ENCODE measurements at regions of chr1 and their contacts with region 1.

Region 1: DNA sequence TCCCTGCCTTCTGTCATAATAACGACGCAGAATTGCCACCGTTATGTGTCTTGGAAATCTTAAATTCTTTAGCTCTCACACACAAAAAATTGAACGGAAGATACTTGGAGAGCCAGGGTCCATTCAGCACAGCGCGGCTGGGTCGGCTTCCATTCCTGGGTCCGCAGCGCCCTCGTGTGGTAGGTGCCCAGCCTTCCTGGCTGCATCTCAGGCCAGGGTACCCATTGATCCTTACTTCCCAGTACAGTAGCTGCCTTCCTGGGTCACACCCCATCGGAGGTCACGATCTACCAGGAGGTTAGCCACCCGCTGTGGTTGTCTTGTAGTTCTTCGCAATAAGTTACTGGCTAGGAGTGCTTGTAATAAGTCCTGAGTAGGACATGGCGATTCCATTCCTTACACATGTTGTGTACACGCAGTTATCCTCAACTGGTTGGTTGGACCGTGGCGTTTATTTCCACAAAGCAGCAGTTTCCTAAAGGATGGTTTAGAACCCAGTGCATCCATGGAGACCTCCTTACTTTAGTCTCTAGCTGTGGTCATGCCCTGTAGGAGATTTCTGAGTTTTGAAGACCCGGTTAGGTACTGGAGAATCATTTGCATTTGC is 9.9 kb upstream of the MTARC1 start:
- DNase-seq: peak; percentile 87
- ATAC-seq: peak; percentile 87
- H3K4me3 Mint-ChIP-seq: no peak overlapping the region
- H3K27ac Mint-ChIP-seq: no peak overlapping the region
- H3K4me1 Mint-ChIP-seq: no peaks in the 10 kb centered on the region
- H3K27me3 Mint-ChIP-seq: peaks cover 11% of the 10 kb centered on the region

Region 2: GRCh38 chr1:219837274-219837993 is 939.4 kb before region 1 on chr1:
- CTCF ChIA-PET with region 1: no interaction called
- POLR2A ChIA-PET with region 1: no interaction called
- intact Hi-C with region 1: loop called in 1 of 2 experiments (anchors 5 kb)
- DNase-seq: no peak
- ATAC-seq: no peak
- H3K4me3 Mint-ChIP-seq: no peak overlapping the region
- H3K27ac Mint-ChIP-seq: no peak overlapping the region
- H3K4me1 Mint-ChIP-seq: no peaks in the 10 kb centered on the region
- H3K27me3 Mint-ChIP-seq: peaks cover 16% of the 10 kb centered on the region

Region 3: GRCh38 chr1:220189750-220190347 is 587.0 kb before region 1 on chr1:
- CTCF ChIA-PET with region 1: interaction called, 5 read pairs
- POLR2A ChIA-PET with region 1: no interaction called
- intact Hi-C with region 1: loop called in 1 of 2 experiments (anchors 1 kb)
- DNase-seq: no peak
- ATAC-seq: no peak
- H3K4me3 Mint-ChIP-seq: no peak overlapping the region
- H3K27ac Mint-ChIP-seq: no peak overlapping the region
- H3K4me1 Mint-ChIP-seq: no peaks in the 10 kb centered on the region
- H3K27me3 Mint-ChIP-seq: no peaks in the 10 kb centered on the region

Region 4: GRCh38 chr1:220281159-220281574 is 495.7 kb before region 1 on chr1:
- CTCF ChIA-PET with region 1: no interaction called
- POLR2A ChIA-PET with region 1: no interaction called
- intact Hi-C with region 1: loop called in 1 of 2 experiments (anchors 5 kb)
- DNase-seq: no peak
- ATAC-seq: no peak
- H3K4me3 Mint-ChIP-seq: no peak overlapping the region
- H3K27ac Mint-ChIP-seq: no peak overlapping the region
- H3K4me1 Mint-ChIP-seq: no peaks in the 10 kb centered on the region
- H3K27me3 Mint-ChIP-seq: peaks cover 7% of the 10 kb centered on the region

Region 5: GRCh38 chr1:220521778-220522177 is 255.0 kb before region 1 on chr1:
- CTCF ChIA-PET with region 1: no interaction called
- POLR2A ChIA-PET with region 1: no interaction called
- intact Hi-C with region 1: no loop called
- DNase-seq: no peak
- ATAC-seq: no peak
- H3K4me3 Mint-ChIP-seq: no peak overlapping the region
- H3K27ac Mint-ChIP-seq: no peak overlapping the region
- H3K4me1 Mint-ChIP-seq: no peaks in the 10 kb centered on the region
- H3K27me3 Mint-ChIP-seq: peaks cover 47% of the 10 kb centered on the region

Region 6: DNA sequence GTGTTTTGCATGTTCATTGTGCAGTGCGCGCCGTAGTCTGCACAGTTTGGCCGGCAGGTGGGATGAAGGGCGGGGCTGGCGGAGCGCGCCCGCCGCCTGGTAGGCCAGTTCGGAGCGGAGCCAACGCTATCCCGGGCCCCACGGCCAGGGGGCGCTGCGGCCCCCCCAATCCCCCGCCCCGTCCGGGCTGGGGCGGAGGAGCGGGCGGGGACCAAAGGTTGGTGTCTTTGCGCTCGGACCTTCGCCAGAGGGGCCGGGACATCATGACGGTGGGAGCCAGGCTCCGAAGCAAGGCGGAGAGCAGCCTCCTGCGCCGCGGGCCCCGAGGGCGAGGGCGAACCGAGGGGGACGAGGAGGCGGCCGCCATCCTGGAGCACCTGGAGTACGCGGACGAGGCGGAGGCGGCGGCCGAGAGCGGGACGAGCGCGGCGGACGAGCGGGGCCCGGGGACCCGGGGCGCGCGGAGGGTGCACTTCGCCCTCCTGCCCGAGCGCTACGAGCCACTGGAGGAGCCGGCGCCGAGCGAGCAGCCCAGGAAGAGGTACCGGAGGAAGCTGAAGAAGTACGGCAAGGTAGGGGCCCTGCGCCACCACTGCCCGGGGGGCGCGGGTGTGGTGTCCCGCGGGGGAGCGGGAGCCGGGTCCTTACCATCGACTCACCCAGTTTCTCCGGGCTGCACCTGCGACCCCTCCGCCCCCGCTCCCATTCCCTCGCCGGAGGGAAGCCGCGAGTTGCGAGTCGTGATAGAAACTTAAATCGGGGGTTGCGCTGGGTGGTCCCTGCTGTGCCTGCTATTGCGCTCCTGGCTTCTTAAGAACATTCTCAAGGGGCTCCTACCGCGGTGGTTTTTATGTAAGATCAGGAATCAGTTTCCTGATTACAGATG is 86.4 kb before region 1 on chr1 and contains the start of gene C1orf115:
- CTCF ChIA-PET with region 1: no interaction called
- POLR2A ChIA-PET with region 1: no interaction called
- intact Hi-C with region 1: loop called (anchors 1 to 2 kb)
- DNase-seq: peak; percentile 85
- ATAC-seq: peak; percentile 96
- H3K4me3 Mint-ChIP-seq: peak within 1 kb of the TSS; percentile 71
- H3K27ac Mint-ChIP-seq: no peak within 1 kb of the TSS
- H3K4me1 Mint-ChIP-seq: peaks cover 4% of the 10 kb centered on the region
- H3K27me3 Mint-ChIP-seq: peaks cover 12% of the 10 kb centered on the region
- total RNA-seq, gene C1orf115: 0.63 to 0.78 TPM

Region 7: DNA sequence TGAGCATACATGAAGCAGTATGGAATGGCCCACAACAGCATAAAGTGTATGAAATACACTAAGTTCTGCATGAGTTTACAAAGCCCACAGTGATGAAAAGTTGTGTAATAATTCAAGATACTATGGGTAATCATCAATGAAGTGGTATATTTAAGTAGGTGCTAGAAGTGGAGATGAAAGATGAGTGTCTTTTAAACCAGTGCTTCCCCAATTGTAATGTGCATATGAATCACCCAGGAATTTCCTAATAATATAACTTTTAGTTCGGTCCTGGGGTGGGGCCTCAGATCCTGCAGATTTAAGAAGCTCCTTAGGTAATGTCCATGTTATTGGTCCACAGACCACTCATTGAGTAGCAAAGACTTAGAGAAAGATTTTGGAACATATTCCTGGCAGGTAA is 780.2 kb after region 1 on chr1:
- CTCF ChIA-PET with region 1: no interaction called
- POLR2A ChIA-PET with region 1: no interaction called
- intact Hi-C with region 1: no loop called
- DNase-seq: no peak
- ATAC-seq: no peak
- H3K4me3 Mint-ChIP-seq: no peak overlapping the region
- H3K27ac Mint-ChIP-seq: no peak overlapping the region
- H3K4me1 Mint-ChIP-seq: no peaks in the 10 kb centered on the region
- H3K27me3 Mint-ChIP-seq: no peaks in the 10 kb centered on the region

Measured in activated CD4-positive, alpha-beta T cell treated with anti-CD3 and anti-CD28 coated beads for 36 hours (primary cell).